Right ventricle myocardium inferior (tissue), 1 donor: ENCODE measurements at regions of chr1 and their contacts with region 1.

Region 1: GRCh38 chr1:209747580-209748262 is 8.1 kb upstream of the TRAF3IP3 start:
- DNase-seq: peak; percentile 93
- ATAC-seq: peak; percentile 96

Region 2: GRCh38 chr1:209576798-209577197 is 170.9 kb before region 1 on chr1:
- intact Hi-C with region 1: loop called (anchors 1 kb)
- DNase-seq: peak; percentile 80
- ATAC-seq: peak; percentile 93

Region 3: GRCh38 chr1:209627732-209628196 is 120.0 kb before region 1 on chr1:
- intact Hi-C with region 1: loop called (anchors 5 kb)
- DNase-seq: peak; percentile 86
- ATAC-seq: peak; percentile 75

Region 4: GRCh38 chr1:209692745-209693504 is 54.8 kb before region 1 on chr1:
- intact Hi-C with region 1: loop called (anchors 2 kb)
- DNase-seq: peak; percentile 75
- ATAC-seq: peak; percentile 67

Region 5: GRCh38 chr1:209784265-209785169 is 36.8 kb after region 1 on chr1 and contains the start of gene C1orf74:
- intact Hi-C with region 1: loop called (anchors 5 kb)
- DNase-seq: peak; percentile 100
- ATAC-seq: peak; percentile 97
- total RNA-seq, gene C1orf74: 1.8 TPM

Region 6: DNA sequence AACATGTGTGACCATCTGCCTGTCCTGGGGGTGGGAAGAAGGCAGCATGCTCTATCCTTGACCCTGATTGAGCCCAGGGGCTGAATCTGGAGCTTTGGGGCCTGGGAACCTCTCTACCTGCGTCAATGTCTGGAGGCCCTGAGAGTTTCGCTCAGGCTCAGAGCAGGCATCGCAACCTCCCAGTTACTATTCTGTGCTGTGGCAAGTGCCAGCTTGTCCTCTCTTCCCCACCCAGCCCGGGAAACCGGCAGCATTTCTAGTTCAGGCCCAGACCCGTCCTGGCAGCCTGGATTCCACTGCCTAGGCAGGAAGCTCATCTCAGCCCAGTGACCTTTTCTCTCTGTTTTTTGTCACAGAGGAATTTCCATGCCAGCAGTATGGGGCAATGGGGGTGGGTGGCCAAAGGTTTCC is 68.2 kb after region 1 on chr1:
- intact Hi-C with region 1: no loop called
- DNase-seq: no peak
- ATAC-seq: no peak

Region 7: DNA sequence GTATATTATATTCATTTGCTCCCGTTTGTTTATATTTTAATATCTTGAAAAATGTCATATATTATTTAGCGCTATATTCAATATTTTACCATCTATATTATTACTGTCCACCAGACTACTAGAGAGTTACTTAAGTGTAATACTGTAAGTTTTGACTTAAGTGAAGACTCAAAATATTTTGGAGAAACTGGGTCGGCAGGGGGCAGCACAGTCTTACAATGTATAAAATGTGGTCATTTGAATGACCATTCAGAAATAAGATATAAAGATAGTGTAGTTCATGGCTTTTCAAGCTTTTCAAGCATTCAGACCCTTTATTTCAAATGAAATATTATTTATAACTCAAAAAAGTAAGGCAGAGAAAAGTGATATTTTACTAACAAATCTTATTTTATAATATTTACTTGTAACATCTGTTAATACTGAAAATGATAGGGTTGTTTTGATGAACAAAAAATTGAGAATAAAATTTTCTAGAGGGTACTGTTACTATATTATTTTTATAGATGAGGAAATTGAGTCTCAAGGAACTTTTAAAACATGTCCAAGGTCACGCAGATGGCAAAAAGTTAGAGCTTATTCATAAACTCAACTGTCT is 395.8 kb after region 1 on chr1:
- intact Hi-C with region 1: no loop called
- DNase-seq: peak; percentile 71
- ATAC-seq: no peak